CD4-positive, alpha-beta T cell (primary cell): ENCODE measurements at regions of chr16 and their contacts with region 1.

Region 1: GRCh38 chr16:22353191-22353919 is 21.1 kb downstream of the CDR2 start:
- DNase-seq: peak in 5 of 14 experiments; percentile 5 to 71 (median 37)
- ATAC-seq: peak; percentile 16
- H3K4me3 ChIP-seq: no peak overlapping the region
- H3K4me3 Mint-ChIP-seq: peak overlapping the region; percentile 39
- H3K27ac ChIP-seq: peak overlapping the region; percentile 38 to 53
- H3K27ac Mint-ChIP-seq: peak overlapping the region; percentile 85
- H3K4me1 ChIP-seq: peaks cover 38% of the 10 kb centered on the region
- H3K4me1 Mint-ChIP-seq: peaks cover 65% of the 10 kb centered on the region
- H3K27me3 ChIP-seq: no peaks in the 10 kb centered on the region
- H3K27me3 Mint-ChIP-seq: no peaks in the 10 kb centered on the region
- CTCF ChIP-seq: no peak

Region 2: GRCh38 chr16:20741554-20742285 is 1611.6 kb before region 1 on chr16 and contains the start of gene THUMPD1:
- CTCF ChIA-PET with region 1: no interaction called
- POLR2A ChIA-PET with region 1: no interaction called
- intact Hi-C with region 1: no loop called
- DNase-seq: peak; percentile 94 to 99 (median 98)
- ATAC-seq: peak; percentile 92
- H3K4me3 ChIP-seq: peak within 1 kb of the TSS; percentile 100
- H3K4me3 Mint-ChIP-seq: peak within 1 kb of the TSS; percentile 97
- H3K27ac ChIP-seq: peak within 1 kb of the TSS; percentile 99 to 100
- H3K27ac Mint-ChIP-seq: peak within 1 kb of the TSS; percentile 99
- H3K4me1 ChIP-seq: peaks cover 35% of the 10 kb centered on the region
- H3K4me1 Mint-ChIP-seq: peaks cover 34% of the 10 kb centered on the region
- H3K27me3 ChIP-seq: no peaks in the 10 kb centered on the region
- H3K27me3 Mint-ChIP-seq: no peaks in the 10 kb centered on the region
- CTCF ChIP-seq: no peak
- total RNA-seq, gene THUMPD1: 105 to 107 TPM

Region 3: DNA sequence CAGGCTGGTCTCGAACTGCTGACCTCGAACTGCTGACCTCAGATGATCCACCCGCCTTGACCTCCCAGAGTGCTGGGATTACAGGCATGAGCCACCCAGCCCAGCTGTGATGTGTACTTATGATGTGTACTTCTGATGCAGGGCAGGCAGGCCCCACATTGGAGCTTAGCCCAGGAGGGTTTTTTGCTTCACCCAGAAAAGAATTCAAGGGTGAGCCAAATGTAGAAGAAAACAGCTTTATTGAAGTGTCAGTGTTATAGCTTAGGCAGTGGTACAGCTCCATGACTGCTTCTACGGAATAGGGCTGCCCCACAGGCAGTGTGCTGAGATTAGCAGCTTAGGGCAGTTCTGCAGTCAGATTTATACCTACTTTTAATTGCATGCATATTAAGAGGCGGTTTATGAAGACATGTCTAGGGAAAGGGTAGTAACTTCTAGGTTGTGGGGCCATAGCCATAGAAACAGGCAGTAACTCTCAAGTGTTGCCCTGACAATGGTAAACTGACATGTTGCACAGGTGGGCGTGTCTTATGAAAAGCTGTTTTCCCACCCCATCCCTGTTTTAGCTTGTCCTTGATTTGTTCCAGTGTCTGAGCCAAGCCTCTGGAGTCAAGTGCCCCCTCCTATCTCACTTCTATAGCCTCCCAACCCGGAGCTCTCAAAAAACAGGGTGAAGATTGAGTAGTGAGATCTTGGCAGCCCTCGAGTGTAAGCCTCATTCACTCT is 80.3 kb before region 1 on chr16:
- CTCF ChIA-PET with region 1: no interaction called
- POLR2A ChIA-PET with region 1: no interaction called
- intact Hi-C with region 1: no loop called
- DNase-seq: no peak
- ATAC-seq: no peak
- H3K4me3 ChIP-seq: no peak overlapping the region
- H3K4me3 Mint-ChIP-seq: no peak overlapping the region
- H3K27ac ChIP-seq: no peak overlapping the region
- H3K27ac Mint-ChIP-seq: no peak overlapping the region
- H3K4me1 ChIP-seq: no peaks in the 10 kb centered on the region
- H3K4me1 Mint-ChIP-seq: no peaks in the 10 kb centered on the region
- H3K27me3 ChIP-seq: no peaks in the 10 kb centered on the region
- H3K27me3 Mint-ChIP-seq: no peaks in the 10 kb centered on the region
- CTCF ChIP-seq: no peak

Region 4: DNA sequence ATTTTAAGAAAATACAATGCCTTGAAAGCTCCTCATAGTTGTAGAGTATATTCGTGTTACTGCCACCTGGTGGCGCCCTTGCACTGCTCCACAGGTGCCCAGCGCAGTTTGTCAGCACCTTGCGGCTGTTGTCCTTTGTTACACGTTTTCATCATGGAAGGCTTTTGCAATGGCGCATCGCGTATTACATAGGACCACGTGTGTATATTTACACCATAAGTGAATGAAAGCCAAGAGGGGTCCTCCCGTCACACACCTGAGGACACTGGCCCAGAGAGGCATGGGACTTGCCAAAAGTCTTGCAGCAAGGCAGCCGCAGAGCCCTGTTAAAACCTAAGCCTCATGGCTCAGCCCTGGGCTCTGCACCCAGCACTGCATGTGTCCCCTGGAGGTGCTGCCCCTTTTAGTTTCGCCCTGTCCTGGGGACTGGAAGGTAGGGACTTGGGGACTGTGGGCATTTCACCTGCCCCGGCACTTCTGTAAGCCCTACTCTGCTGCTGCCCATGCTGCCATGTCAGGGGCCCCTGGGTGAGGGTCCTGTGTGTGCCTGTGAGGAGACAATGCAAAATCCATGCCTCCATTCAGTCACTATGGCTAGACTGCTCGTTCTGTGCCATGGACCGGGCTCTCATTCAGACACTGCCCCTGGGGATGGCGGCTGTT is 31.9 kb before region 1 on chr16:
- CTCF ChIA-PET with region 1: interaction called, 7 read pairs
- POLR2A ChIA-PET with region 1: interaction called, 9 read pairs
- intact Hi-C with region 1: loop called in 1 of 2 experiments (anchors 5 kb)
- DNase-seq: peak; percentile 54 to 89 (median 69)
- ATAC-seq: peak; percentile 81
- H3K4me3 ChIP-seq: no peak overlapping the region
- H3K4me3 Mint-ChIP-seq: no peak overlapping the region
- H3K27ac ChIP-seq: no peak overlapping the region
- H3K27ac Mint-ChIP-seq: peak overlapping the region; percentile 82
- H3K4me1 ChIP-seq: peaks cover 10% of the 10 kb centered on the region
- H3K4me1 Mint-ChIP-seq: peaks cover 11% of the 10 kb centered on the region
- H3K27me3 ChIP-seq: no peaks in the 10 kb centered on the region
- H3K27me3 Mint-ChIP-seq: no peaks in the 10 kb centered on the region
- CTCF ChIP-seq: peak; percentile 99

Region 5: DNA sequence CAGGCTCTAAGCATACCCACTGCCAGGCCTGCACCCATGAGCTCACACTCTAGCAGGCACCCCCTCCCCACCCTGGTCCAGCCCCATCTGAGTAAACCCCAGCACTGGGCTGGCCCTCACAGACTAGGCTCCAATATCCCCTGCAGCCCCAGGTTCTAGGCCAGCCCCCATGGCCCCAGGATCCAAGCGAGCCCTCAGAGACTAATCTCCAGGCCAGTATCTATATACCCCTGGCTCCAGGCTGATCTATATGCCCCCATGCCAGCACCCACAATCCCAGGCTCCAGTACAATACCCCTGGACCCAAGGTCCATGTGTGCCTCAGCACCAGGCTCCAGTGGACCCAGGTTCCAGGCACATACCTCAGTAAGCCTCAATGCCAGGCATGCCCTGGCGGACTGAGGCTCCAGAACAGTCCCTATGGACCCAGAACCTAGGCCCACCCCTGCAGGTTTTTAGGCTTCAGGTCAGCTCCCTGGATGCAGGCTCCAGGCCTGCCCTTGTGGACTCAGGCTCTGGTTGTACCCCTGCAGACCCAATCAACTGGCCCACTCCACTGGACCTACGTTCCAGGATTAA is 17.6 kb before region 1 on chr16:
- CTCF ChIA-PET with region 1: interaction called, 3 read pairs
- POLR2A ChIA-PET with region 1: interaction called, 10 read pairs
- intact Hi-C with region 1: loop called in 1 of 2 experiments (anchors 2 kb)
- DNase-seq: no peak
- ATAC-seq: peak; percentile 28
- H3K4me3 ChIP-seq: no peak overlapping the region
- H3K4me3 Mint-ChIP-seq: no peak overlapping the region
- H3K27ac ChIP-seq: no peak overlapping the region
- H3K27ac Mint-ChIP-seq: peak overlapping the region; percentile 64
- H3K4me1 ChIP-seq: no peaks in the 10 kb centered on the region
- H3K4me1 Mint-ChIP-seq: peaks cover 29% of the 10 kb centered on the region
- H3K27me3 ChIP-seq: no peaks in the 10 kb centered on the region
- H3K27me3 Mint-ChIP-seq: no peaks in the 10 kb centered on the region
- CTCF ChIP-seq: no peak

Region 6: DNA sequence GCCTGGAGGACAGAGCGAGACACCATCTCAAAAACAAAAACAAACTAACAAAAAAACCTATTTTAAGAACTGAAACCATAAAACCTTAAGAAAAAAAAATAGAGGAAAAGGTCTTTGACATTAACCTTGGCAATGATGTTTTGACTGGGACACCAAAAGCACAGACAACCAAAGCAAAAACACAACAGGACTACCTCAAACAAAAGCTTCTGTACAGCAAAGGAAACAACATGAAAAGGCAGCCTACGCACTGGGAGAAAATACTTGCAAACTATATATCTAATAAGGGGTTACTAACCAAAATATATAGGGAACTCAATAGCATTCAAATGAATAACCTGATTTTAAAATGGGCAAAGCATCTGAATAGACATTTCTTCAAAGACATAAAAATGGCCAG is 11.3 kb before region 1 on chr16:
- CTCF ChIA-PET with region 1: interaction called, 3 read pairs
- POLR2A ChIA-PET with region 1: interaction called, 14 read pairs
- intact Hi-C with region 1: loop called in 1 of 2 experiments (anchors 1 kb)
- DNase-seq: no peak
- ATAC-seq: peak; percentile 79
- H3K4me3 ChIP-seq: no peak overlapping the region
- H3K4me3 Mint-ChIP-seq: no peak overlapping the region
- H3K27ac ChIP-seq: no peak overlapping the region
- H3K27ac Mint-ChIP-seq: peak overlapping the region; percentile 85
- H3K4me1 ChIP-seq: no peaks in the 10 kb centered on the region
- H3K4me1 Mint-ChIP-seq: peaks cover 50% of the 10 kb centered on the region
- H3K27me3 ChIP-seq: no peaks in the 10 kb centered on the region
- H3K27me3 Mint-ChIP-seq: no peaks in the 10 kb centered on the region
- CTCF ChIP-seq: no peak

Region 7: DNA sequence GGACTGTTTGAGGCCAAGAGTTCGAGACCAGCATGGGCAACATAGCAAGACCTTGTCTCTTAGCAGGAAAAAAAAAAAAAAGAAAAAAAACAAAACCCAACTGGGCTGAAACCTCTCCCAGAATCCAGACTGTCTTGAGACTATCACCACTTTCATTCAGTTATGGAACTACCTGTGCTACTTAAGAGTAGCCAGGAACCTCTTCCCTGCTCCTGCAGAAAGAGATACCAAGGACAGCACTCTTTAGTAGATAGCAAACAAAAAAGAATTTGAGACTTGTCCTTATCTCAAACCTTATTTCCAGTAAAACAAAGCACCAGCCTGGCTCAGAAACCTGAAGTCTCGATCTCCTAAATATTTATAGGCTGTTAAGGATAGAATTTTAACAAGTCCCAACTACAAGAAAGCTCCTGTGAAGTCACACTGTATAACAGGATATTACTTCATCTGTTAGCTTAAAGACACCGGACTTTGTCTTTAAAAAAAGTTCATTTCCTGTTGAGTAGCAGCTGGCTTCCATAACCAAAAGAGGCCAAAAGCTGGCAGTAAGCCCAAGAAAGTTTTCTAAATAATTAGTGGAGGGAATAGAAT is 16.0 kb after region 1 on chr16:
- CTCF ChIA-PET with region 1: interaction called, 5 read pairs
- POLR2A ChIA-PET with region 1: interaction called, 327 read pairs
- intact Hi-C with region 1: loop called (anchors 1 to 2 kb)
- DNase-seq: peak in 3 of 14 experiments; percentile 49 to 78 (median 49)
- ATAC-seq: no peak
- H3K4me3 ChIP-seq: no peak overlapping the region
- H3K4me3 Mint-ChIP-seq: peak overlapping the region; percentile 73
- H3K27ac ChIP-seq: peak overlapping the region in 1 of 2 donors; percentile 45
- H3K27ac Mint-ChIP-seq: peak overlapping the region; percentile 97
- H3K4me1 ChIP-seq: peaks cover 45% of the 10 kb centered on the region
- H3K4me1 Mint-ChIP-seq: peaks cover 89% of the 10 kb centered on the region
- H3K27me3 ChIP-seq: no peaks in the 10 kb centered on the region
- H3K27me3 Mint-ChIP-seq: no peaks in the 10 kb centered on the region
- CTCF ChIP-seq: no peak